Activated B cell treated with CpG ODN at 0.5 μM for 24 hours (primary cell): ENCODE measurements at regions of chr10 and their contacts with region 1.

Region 1: GRCh38 chr10:4131407-4132228 is 346.6 kb upstream of the KLF6 start:
- DNase-seq: no peak
- ATAC-seq: peak; percentile 75
- H3K4me3 Mint-ChIP-seq: no peak overlapping the region
- H3K27ac Mint-ChIP-seq: no peak overlapping the region
- H3K4me1 Mint-ChIP-seq: peaks cover 35% of the 10 kb centered on the region
- H3K27me3 Mint-ChIP-seq: no peaks in the 10 kb centered on the region
- CTCF ChIP-seq: no peak

Region 2: GRCh38 chr10:3757638-3758490 is 373.8 kb before region 1 on chr10:
- CTCF ChIA-PET with region 1: no interaction called
- POLR2A ChIA-PET with region 1: interaction called, 19 read pairs
- intact Hi-C with region 1: loop called (anchors 1 kb)
- DNase-seq: no peak
- ATAC-seq: peak; percentile 60
- H3K4me3 Mint-ChIP-seq: peak overlapping the region; percentile 78
- H3K27ac Mint-ChIP-seq: peak overlapping the region; percentile 99
- H3K4me1 Mint-ChIP-seq: peaks cover 76% of the 10 kb centered on the region
- H3K27me3 Mint-ChIP-seq: no peaks in the 10 kb centered on the region
- CTCF ChIP-seq: no peak

Region 3: DNA sequence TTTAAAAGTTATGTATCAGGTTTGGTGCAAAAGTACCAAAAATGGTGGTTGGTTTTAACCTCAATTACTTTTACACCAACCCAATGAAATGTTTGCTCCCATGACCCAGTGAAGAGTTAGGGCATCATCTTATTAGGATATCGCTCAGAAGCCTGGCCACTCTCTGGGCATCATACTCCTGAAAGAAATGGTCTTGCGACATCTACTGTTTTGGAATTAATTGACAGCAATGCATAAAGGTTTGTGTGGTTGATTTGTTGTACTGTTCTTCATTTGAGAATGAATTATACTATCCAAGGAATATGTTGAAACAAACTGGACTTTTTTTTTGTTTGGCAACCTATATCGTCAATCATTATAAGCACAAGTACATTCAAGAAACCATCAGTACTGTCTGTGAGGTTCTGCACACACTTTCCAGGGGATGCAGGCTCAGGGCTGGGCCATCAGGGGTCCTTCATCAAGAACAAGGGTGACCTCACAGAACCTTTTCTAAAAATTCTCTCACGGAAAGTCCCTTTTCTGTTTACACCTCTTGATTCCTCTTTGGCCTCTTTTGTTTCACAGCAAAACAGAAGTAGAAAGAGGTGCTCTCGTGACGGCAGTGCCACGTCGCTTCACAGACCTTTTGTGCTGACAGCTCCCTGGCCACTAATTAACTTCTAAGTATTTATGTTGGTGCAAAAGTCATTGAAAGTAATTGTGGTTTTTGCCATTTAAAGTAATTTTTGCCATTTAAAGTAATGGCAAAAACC is 229.4 kb before region 1 on chr10:
- CTCF ChIA-PET with region 1: no interaction called
- POLR2A ChIA-PET with region 1: no interaction called
- intact Hi-C with region 1: loop called (anchors 2 kb)
- DNase-seq: peak; percentile 30
- ATAC-seq: peak; percentile 87
- H3K4me3 Mint-ChIP-seq: peak overlapping the region; percentile 58
- H3K27ac Mint-ChIP-seq: peak overlapping the region; percentile 87
- H3K4me1 Mint-ChIP-seq: peaks cover 54% of the 10 kb centered on the region
- H3K27me3 Mint-ChIP-seq: no peaks in the 10 kb centered on the region
- CTCF ChIP-seq: no peak

Region 4: DNA sequence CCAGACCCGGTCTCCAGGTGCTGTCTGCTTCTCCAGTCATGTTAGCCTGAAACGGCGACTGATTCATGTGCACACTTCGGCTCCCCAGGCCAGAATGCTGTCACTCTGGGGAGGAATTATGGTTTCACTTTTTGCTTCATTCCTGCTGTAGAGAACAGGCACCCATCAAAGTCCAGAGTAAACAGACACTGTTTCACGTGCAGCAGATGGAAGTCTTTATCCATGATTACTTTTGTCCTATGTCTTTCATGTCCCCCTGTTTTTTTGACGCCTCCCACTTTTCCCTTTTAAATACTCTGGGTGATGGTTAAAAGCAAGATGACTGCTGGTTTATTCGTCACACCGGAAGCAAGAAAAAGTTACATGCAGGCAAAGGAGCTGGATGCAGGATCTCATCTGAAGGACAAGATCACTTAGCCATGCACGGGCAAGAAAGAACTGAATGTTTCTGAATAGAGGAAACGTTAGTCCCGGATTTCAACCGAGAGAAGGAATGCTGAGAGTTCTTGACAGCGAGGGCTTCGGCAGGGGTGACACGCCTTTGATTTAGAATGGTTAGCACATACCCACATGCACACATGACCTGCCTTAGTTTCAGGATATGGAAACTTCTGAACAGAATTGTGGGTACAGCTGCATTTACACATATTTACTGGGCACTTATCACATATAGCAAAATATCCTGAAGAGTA is 96.6 kb before region 1 on chr10:
- CTCF ChIA-PET with region 1: no interaction called
- POLR2A ChIA-PET with region 1: interaction called, 9 read pairs
- intact Hi-C with region 1: loop called (anchors 1 kb)
- DNase-seq: no peak
- ATAC-seq: peak; percentile 43
- H3K4me3 Mint-ChIP-seq: peak overlapping the region; percentile 76
- H3K27ac Mint-ChIP-seq: peak overlapping the region; percentile 51
- H3K4me1 Mint-ChIP-seq: peaks cover 32% of the 10 kb centered on the region
- H3K27me3 Mint-ChIP-seq: no peaks in the 10 kb centered on the region
- CTCF ChIP-seq: no peak

Region 5: GRCh38 chr10:4214908-4215307 is 83.3 kb after region 1 on chr10:
- CTCF ChIA-PET with region 1: no interaction called
- POLR2A ChIA-PET with region 1: no interaction called
- intact Hi-C with region 1: loop called (anchors 5 kb)
- DNase-seq: no peak
- ATAC-seq: no peak
- H3K4me3 Mint-ChIP-seq: no peak overlapping the region
- H3K27ac Mint-ChIP-seq: no peak overlapping the region
- H3K4me1 Mint-ChIP-seq: peaks cover 3% of the 10 kb centered on the region
- H3K27me3 Mint-ChIP-seq: no peaks in the 10 kb centered on the region
- CTCF ChIP-seq: no peak

Region 6: DNA sequence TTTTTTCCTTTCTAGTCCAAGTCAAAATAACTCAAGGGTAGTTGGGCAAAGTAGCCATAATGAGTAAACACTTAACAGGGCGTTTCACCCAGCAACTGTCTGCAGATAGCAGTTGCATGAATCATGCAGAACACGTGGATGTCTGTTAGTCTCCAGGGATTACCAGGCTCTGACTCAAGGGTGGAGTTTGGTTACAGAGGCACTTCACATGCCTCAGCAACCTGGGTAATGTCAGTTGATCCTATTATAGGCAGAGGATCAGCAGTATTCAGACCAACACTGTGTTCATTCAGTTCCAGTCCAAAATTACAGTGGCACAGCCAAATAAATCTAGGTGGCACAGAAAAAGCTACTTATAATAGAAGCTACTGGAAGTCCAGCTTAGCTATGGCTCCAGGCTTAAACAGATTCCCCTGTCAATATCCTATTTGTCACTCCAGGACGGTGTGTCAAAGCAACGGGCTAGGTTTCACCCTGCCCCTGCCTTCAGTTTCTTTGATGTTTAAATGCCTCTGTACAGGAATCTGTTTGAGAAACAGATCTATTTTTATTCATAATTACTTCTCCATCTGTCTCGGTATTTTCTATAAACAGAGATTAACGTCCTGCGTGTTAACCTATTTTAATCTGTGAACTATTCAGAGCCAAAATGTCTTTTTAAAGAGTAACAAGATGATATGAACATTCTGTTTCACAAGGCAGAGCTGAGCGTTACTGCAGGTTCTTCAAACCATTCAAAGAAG is 531.7 kb after region 1 on chr10:
- CTCF ChIA-PET with region 1: no interaction called
- POLR2A ChIA-PET with region 1: no interaction called
- intact Hi-C with region 1: loop called (anchors 5 kb)
- DNase-seq: peak; percentile 27
- ATAC-seq: peak; percentile 100
- H3K4me3 Mint-ChIP-seq: peak overlapping the region; percentile 50
- H3K27ac Mint-ChIP-seq: peak overlapping the region; percentile 36
- H3K4me1 Mint-ChIP-seq: peaks cover 20% of the 10 kb centered on the region
- H3K27me3 Mint-ChIP-seq: peaks cover 2% of the 10 kb centered on the region
- CTCF ChIP-seq: no peak